ENCODE measurements at regions of chr11 and their contacts with region 1.

Region 1: GRCh38 chr11:68471360-68472340 is 11.1 kb downstream of the PPP6R3 start:
- DNase-seq: peak; percentile 35
- H3K4me3 Mint-ChIP-seq: peak overlapping the region; percentile 73
- H3K27ac Mint-ChIP-seq: peak overlapping the region; percentile 87
- H3K4me1 Mint-ChIP-seq: peaks cover 67% of the 10 kb centered on the region
- H3K27me3 Mint-ChIP-seq: no peaks in the 10 kb centered on the region

Region 2: GRCh38 chr11:68430801-68431200 is 40.8 kb before region 1 on chr11:
- intact Hi-C with region 1: no loop called
- DNase-seq: no peak
- H3K4me3 Mint-ChIP-seq: no peak overlapping the region
- H3K27ac Mint-ChIP-seq: no peak overlapping the region
- H3K4me1 Mint-ChIP-seq: no peaks in the 10 kb centered on the region
- H3K27me3 Mint-ChIP-seq: no peaks in the 10 kb centered on the region

Region 3: GRCh38 chr11:68459886-68460740 is 11.5 kb before region 1 on chr11:
- intact Hi-C with region 1: loop called (anchors 1 kb)
- DNase-seq: peak; percentile 92
- H3K4me3 Mint-ChIP-seq: peak overlapping the region; percentile 88
- H3K27ac Mint-ChIP-seq: peak overlapping the region; percentile 89
- H3K4me1 Mint-ChIP-seq: peaks cover 23% of the 10 kb centered on the region
- H3K27me3 Mint-ChIP-seq: no peaks in the 10 kb centered on the region

Region 4: GRCh38 chr11:68488623-68489022 is 17.0 kb after region 1 on chr11:
- intact Hi-C with region 1: no loop called
- DNase-seq: no peak
- H3K4me3 Mint-ChIP-seq: no peak overlapping the region
- H3K27ac Mint-ChIP-seq: no peak overlapping the region
- H3K4me1 Mint-ChIP-seq: peaks cover 32% of the 10 kb centered on the region
- H3K27me3 Mint-ChIP-seq: no peaks in the 10 kb centered on the region

Region 5: DNA sequence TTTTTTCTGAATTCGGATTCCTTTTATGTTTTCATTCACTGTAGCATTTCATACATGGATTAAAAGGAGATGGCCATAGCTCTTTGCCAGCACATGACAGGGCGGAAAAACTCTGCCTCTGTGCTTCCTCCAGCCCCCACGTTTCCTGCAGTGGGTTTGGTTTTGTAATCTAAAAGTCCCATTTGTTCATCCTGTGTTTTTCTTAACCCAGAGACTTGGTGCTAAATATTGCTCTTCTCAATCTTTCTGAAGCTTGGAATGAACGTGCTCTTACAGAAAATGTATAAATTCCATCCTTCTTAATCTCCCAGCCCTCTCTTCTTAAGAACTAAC is 78.8 kb after region 1 on chr11:
- intact Hi-C with region 1: loop called (anchors 2 kb)
- DNase-seq: no peak
- H3K4me3 Mint-ChIP-seq: peak overlapping the region; percentile 59
- H3K27ac Mint-ChIP-seq: peak overlapping the region; percentile 86
- H3K4me1 Mint-ChIP-seq: peaks cover 45% of the 10 kb centered on the region
- H3K27me3 Mint-ChIP-seq: no peaks in the 10 kb centered on the region

Measured in activated T-helper 2 cell treated with anti-CD3 and anti-CD28 coated beads, Interferon-gamma antibody, Interleukin-2, Interleukin-4, amounts not matched to agents 10 μg/mL and 5 μg/mL and 100 μg/mL, durations not matched to agents 14 hours and 24 hours and 36 hours (primary cell).